Caco-2 (cell line): ENCODE measurements at regions of chr19 and their contacts with region 1.

Region 1: DNA sequence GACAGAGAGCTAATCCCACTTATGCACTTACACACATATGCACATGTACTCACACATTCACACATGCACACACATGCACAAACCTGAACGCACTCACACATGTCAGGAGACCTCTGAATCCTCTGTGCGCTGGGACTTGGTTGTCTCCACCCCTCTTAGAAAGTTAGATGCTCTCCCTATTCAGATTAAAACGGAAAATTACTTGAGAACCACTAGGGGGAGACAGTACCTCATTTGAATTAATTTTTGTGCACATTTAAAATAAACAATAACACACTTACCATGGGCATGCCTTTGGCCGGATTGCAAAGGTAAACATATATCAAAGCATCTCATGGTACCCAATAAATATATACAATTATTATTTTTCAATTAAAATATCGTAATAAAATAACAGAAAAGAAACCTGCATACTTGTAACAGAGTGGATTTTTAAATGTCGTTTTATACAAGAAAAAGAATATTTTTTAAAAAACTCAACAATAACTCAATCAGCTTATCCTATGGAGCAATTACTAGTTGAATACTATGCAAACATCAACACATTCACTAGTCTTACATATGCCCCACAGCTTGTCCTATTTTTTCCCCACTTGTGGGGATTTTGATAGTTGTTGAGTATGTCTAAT is 9.5 kb upstream of the LILRB4 start:
- DNase-seq: peak in 1 of 2 experiments; percentile 16
- H3K4me3 ChIP-seq: no peak overlapping the region
- H3K4me3 Mint-ChIP-seq: no peak overlapping the region
- H3K27ac Mint-ChIP-seq: no peak overlapping the region
- H3K4me1 ChIP-seq: no peaks in the 10 kb centered on the region
- H3K4me1 Mint-ChIP-seq: no peaks in the 10 kb centered on the region
- H3K27me3 ChIP-seq: no peaks in the 10 kb centered on the region
- H3K27me3 Mint-ChIP-seq: peaks cover 10% of the 10 kb centered on the region
- CTCF ChIP-seq: peak; percentile 56 to 67

Region 2: GRCh38 chr19:54928299-54928698 is 275.0 kb after region 1 on chr19:
- CTCF ChIA-PET with region 1: no interaction called
- POLR2A ChIA-PET with region 1: no interaction called
- intact Hi-C with region 1: loop called (anchors 10 kb)
- DNase-seq: no peak
- H3K4me3 ChIP-seq: no peak overlapping the region
- H3K4me3 Mint-ChIP-seq: no peak overlapping the region
- H3K27ac Mint-ChIP-seq: no peak overlapping the region
- H3K4me1 ChIP-seq: no peaks in the 10 kb centered on the region
- H3K4me1 Mint-ChIP-seq: no peaks in the 10 kb centered on the region
- H3K27me3 ChIP-seq: no peaks in the 10 kb centered on the region
- H3K27me3 Mint-ChIP-seq: no peaks in the 10 kb centered on the region
- CTCF ChIP-seq: no peak